Calu3 (cell line): ENCODE measurements at regions of chr16 and their contacts with region 1.

Region 1: GRCh38 chr16:6081320-6081976 is 983.9 kb upstream of the EEF2KMT start:
- DNase-seq: peak; percentile 60
- H3K4me3 Mint-ChIP-seq: no peak overlapping the region
- H3K27ac Mint-ChIP-seq: no peak overlapping the region
- H3K4me1 Mint-ChIP-seq: no peaks in the 10 kb centered on the region
- H3K27me3 Mint-ChIP-seq: no peaks in the 10 kb centered on the region
- CTCF ChIP-seq: peak; percentile 58

Region 2: GRCh38 chr16:5502467-5502869 is 579.0 kb before region 1 on chr16:
- CTCF ChIA-PET with region 1: interaction called, 3 read pairs
- intact Hi-C with region 1: loop called (anchors 1 kb)
- DNase-seq: peak; percentile 46
- H3K4me3 Mint-ChIP-seq: no peak overlapping the region
- H3K27ac Mint-ChIP-seq: no peak overlapping the region
- H3K4me1 Mint-ChIP-seq: no peaks in the 10 kb centered on the region
- H3K27me3 Mint-ChIP-seq: peaks cover 72% of the 10 kb centered on the region
- CTCF ChIP-seq: peak; percentile 45

Region 3: DNA sequence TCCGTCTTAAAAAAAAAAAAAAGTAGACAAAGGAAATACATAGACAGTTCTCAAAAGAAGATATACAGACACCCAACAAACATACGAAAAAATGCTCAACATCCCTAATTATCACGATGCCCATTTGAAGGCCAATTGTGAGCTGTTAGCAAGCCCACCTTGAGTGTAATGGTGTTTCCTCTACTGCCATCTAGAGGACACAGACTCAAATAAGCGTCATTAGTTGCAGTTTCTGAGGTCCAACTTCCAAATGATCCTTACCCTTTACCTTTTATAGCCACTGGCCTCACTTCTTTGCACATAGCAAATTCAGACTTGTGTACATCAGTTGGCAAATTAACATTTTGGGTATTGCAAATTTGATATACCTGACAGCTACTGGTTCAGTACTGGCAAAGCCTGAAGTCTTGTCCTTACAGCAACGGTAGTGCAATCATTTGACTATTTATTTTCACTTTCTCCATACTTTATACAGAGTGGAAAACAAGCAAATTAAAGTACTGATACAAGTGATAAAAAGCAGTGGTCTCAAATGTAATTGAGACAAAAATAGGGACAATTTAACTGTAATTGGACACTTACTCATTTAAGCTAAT is 447.5 kb before region 1 on chr16:
- CTCF ChIA-PET with region 1: interaction called, 3 read pairs
- intact Hi-C with region 1: loop called (anchors 2 kb)
- DNase-seq: no peak
- H3K4me3 Mint-ChIP-seq: no peak overlapping the region
- H3K27ac Mint-ChIP-seq: no peak overlapping the region
- H3K4me1 Mint-ChIP-seq: no peaks in the 10 kb centered on the region
- H3K27me3 Mint-ChIP-seq: peaks cover 32% of the 10 kb centered on the region
- CTCF ChIP-seq: peak; percentile 35